ENCODE measurements at regions of chr11 and their contacts with region 1.

Region 1: DNA sequence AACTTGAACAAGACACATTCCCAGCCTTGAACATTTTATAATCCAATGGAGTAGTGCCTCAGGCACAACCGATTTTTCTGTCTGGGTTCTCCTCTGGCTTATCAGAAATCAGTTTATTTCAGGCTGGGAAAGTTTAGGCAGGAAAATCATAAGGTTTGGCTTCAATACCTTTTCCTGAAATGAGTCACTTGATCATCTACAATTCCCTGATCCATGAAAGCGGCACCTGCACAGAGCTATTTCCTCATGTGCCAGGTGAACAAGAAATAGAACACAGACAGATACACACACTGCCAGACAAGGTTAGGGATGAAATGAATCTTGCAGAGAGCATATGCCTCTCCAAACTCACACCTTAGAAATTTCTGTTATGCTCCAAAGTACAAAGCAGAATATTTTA is 106.7 kb upstream of the OR9G4 start:
- DNase-seq: no peak
- ATAC-seq: no peak
- H3K4me3 Mint-ChIP-seq: no peak overlapping the region
- H3K27ac Mint-ChIP-seq: no peak overlapping the region
- H3K4me1 Mint-ChIP-seq: no peaks in the 10 kb centered on the region
- H3K27me3 Mint-ChIP-seq: no peaks in the 10 kb centered on the region
- CTCF ChIP-seq: no peak

Region 2: GRCh38 chr11:56799691-56800210 is 55.5 kb before region 1 on chr11:
- CTCF ChIA-PET with region 1: no interaction called
- POLR2A ChIA-PET with region 1: no interaction called
- intact Hi-C with region 1: no loop called
- DNase-seq: no peak
- ATAC-seq: no peak
- H3K4me3 Mint-ChIP-seq: no peak overlapping the region
- H3K27ac Mint-ChIP-seq: no peak overlapping the region
- H3K4me1 Mint-ChIP-seq: no peaks in the 10 kb centered on the region
- H3K27me3 Mint-ChIP-seq: no peaks in the 10 kb centered on the region
- CTCF ChIP-seq: no peak

Region 3: GRCh38 chr11:56841210-56841810 is 13.9 kb before region 1 on chr11:
- CTCF ChIA-PET with region 1: interaction called, 13 read pairs
- POLR2A ChIA-PET with region 1: no interaction called
- intact Hi-C with region 1: no loop called
- DNase-seq: peak; percentile 54
- ATAC-seq: no peak
- H3K4me3 Mint-ChIP-seq: no peak overlapping the region
- H3K27ac Mint-ChIP-seq: no peak overlapping the region
- H3K4me1 Mint-ChIP-seq: no peaks in the 10 kb centered on the region
- H3K27me3 Mint-ChIP-seq: peaks cover 2% of the 10 kb centered on the region
- CTCF ChIP-seq: peak; percentile 71

Region 4: GRCh38 chr11:56910785-56911184 is 55.6 kb after region 1 on chr11:
- CTCF ChIA-PET with region 1: no interaction called
- POLR2A ChIA-PET with region 1: no interaction called
- intact Hi-C with region 1: loop called (anchors 10 kb)
- DNase-seq: no peak
- ATAC-seq: no peak
- H3K4me3 Mint-ChIP-seq: no peak overlapping the region
- H3K27ac Mint-ChIP-seq: no peak overlapping the region
- H3K4me1 Mint-ChIP-seq: no peaks in the 10 kb centered on the region
- H3K27me3 Mint-ChIP-seq: no peaks in the 10 kb centered on the region
- CTCF ChIP-seq: no peak